Activated naive CD4-positive, alpha-beta T cell treated with anti-CD3 and anti-CD28 coated beads for 36 hours (primary cell): ENCODE measurements at regions of chr2 and their contacts with region 1.

Region 1: GRCh38 chr2:9555297-9556141 is at the start of gene ADAM17:
- DNase-seq: peak; percentile 88
- H3K4me3 Mint-ChIP-seq: peak within 1 kb of the TSS; percentile 98
- H3K27ac Mint-ChIP-seq: peak within 1 kb of the TSS; percentile 96
- H3K4me1 Mint-ChIP-seq: peaks cover 46% of the 10 kb centered on the region
- H3K27me3 Mint-ChIP-seq: no peaks in the 10 kb centered on the region
- total RNA-seq, gene ADAM17: 10.5 to 11.0 TPM

Region 2: DNA sequence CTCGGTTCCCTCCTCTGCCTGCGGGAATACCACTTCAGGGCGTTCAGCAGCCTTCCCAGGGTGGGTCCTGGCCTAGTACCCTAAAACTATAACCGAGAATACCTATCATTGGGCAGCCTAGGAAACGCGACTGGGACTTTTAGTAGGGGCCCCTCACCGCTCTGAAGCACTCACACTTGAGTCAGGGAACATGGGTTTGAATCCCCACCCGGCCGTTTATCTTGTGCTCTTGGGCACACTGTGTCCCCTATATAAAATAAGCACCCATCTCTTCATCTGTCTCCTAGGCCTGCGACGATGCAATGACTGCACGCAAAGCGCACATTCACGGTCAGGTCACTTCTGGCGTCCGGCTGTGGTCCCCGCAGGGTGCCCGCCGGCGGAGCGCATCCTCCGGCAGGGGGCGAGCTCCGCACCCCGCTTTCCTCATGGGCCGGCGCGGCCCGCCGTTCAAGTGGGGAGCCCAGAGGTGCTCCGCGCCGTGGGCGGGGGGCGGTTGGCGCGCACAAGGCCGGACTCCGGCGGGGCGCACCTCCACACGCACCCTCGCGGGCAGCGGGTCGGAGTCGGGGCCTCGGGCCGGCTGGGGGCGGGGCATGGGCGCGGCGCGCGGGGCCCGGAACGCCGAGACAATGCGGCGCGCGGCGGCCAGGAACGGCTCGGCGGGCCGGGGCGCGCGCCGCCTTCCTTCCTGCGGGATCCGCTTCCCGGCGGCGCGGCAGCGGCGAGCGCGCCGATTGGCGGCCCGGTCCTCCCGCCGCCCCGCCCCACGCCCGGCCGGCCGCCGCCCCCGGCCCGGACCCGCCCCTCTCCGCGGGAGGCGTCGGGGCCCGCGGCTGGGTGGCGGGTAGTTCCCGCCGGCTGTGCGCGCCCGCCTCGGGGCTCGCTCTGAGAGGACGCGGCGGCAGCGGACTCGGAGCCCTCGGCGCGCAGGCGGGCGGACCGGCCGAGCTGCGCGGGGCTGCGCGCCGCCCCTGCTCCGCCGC is 349.3 kb before region 1 on chr2 and contains the start of gene ASAP2:
- CTCF ChIA-PET with region 1: no interaction called
- intact Hi-C with region 1: loop called (anchors 10 kb)
- DNase-seq: peak; percentile 44
- H3K4me3 Mint-ChIP-seq: peak within 1 kb of the TSS; percentile 65
- H3K27ac Mint-ChIP-seq: no peak within 1 kb of the TSS
- H3K4me1 Mint-ChIP-seq: peaks cover 5% of the 10 kb centered on the region
- H3K27me3 Mint-ChIP-seq: peaks cover 45% of the 10 kb centered on the region
- total RNA-seq, gene ASAP2: 0.14 to 0.15 TPM

Region 3: GRCh38 chr2:9594366-9595054 is 39.0 kb after region 1 on chr2:
- CTCF ChIA-PET with region 1: interaction called, 5 read pairs
- intact Hi-C with region 1: loop called (anchors 1 kb)
- DNase-seq: peak; percentile 21
- H3K4me3 Mint-ChIP-seq: peak overlapping the region; percentile 1
- H3K27ac Mint-ChIP-seq: peak overlapping the region; percentile 86
- H3K4me1 Mint-ChIP-seq: peaks cover 72% of the 10 kb centered on the region
- H3K27me3 Mint-ChIP-seq: no peaks in the 10 kb centered on the region

Region 4: GRCh38 chr2:9703085-9703641 is 147.6 kb after region 1 on chr2:
- CTCF ChIA-PET with region 1: no interaction called
- intact Hi-C with region 1: loop called (anchors 1 kb)
- DNase-seq: peak; percentile 87
- H3K4me3 Mint-ChIP-seq: no peak overlapping the region
- H3K27ac Mint-ChIP-seq: no peak overlapping the region
- H3K4me1 Mint-ChIP-seq: peaks cover 25% of the 10 kb centered on the region
- H3K27me3 Mint-ChIP-seq: no peaks in the 10 kb centered on the region

Region 5: GRCh38 chr2:9843229-9844035 is 287.9 kb after region 1 on chr2 and contains the start of gene TAF1B:
- CTCF ChIA-PET with region 1: no interaction called
- intact Hi-C with region 1: loop called (anchors 2 kb)
- DNase-seq: peak; percentile 89
- H3K4me3 Mint-ChIP-seq: peak within 1 kb of the TSS; percentile 93
- H3K27ac Mint-ChIP-seq: peak within 1 kb of the TSS; percentile 88
- H3K4me1 Mint-ChIP-seq: peaks cover 35% of the 10 kb centered on the region
- H3K27me3 Mint-ChIP-seq: no peaks in the 10 kb centered on the region
- total RNA-seq, gene TAF1B: 24.8 to 25.7 TPM

Region 6: DNA sequence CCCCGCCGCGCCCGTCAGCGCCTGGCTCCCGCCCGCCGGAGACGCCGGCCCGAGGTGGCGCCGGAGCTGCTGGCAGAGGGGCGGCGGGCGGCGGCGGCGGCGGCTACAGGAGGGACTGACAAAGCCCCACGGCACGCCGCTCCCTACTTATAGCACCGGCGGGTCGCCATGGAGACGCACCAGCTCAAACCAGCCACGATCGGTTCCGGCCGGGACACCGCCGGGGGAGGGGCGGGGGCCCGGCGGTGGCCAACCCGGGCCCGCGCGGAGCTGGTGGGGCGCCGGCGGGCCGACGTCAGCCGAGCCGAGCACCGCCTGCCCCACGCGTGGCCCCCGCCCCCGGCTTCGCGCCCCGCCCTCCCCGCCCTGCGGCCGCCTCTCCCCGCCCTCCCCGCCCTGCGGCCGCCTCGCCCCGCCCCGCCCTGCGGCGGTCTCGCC is 892.7 kb after region 1 on chr2 and contains the start of gene ODC1:
- CTCF ChIA-PET with region 1: no interaction called
- intact Hi-C with region 1: loop called (anchors 5 kb)
- DNase-seq: peak; percentile 89
- H3K4me3 Mint-ChIP-seq: peak within 1 kb of the TSS; percentile 85
- H3K27ac Mint-ChIP-seq: peak within 1 kb of the TSS; percentile 91
- H3K4me1 Mint-ChIP-seq: peaks cover 56% of the 10 kb centered on the region
- H3K27me3 Mint-ChIP-seq: no peaks in the 10 kb centered on the region
- total RNA-seq, gene ODC1: 174 to 177 TPM